A673 (cell line): ENCODE measurements at regions of chr13 and their contacts with region 1.

Region 1: DNA sequence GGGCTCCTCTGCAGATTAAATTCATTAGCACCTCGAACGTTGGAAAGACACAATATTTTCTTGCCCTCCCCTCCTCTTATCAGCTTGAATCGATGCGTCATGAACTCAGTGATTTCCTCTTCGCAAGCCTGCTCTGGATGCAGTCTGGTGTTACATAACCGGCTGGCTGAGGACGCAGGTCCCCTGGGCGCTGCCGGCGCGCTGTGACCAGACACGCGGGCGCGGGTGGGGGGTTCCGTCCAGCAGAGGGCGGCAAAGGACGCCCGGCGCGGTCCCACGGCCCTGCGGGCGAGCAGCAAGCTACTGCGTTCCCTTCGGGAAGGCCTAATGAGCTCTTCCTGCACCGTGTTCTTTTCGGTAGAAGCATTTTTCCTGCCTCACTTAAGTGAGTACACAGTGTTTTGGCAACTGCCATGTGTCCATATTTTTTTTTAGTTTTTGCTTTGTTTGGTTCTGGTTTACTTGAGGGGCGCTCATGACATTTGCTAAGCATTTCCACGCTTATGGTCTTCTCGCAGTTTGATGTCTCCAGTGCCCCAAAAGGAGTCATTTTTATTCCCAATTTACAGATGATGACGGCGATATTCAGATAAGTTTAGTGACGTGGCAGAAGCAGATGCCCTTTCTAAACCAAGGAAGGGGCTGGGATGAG is 112.2 kb upstream of the MBNL2 start:
- DNase-seq: peak; percentile 88
- H3K4me3 ChIP-seq: no peak overlapping the region
- H3K27ac ChIP-seq: no peak overlapping the region
- H3K4me1 ChIP-seq: no peaks in the 10 kb centered on the region
- H3K27me3 ChIP-seq: no peaks in the 10 kb centered on the region
- CTCF ChIP-seq: peak; percentile 98

Region 2: DNA sequence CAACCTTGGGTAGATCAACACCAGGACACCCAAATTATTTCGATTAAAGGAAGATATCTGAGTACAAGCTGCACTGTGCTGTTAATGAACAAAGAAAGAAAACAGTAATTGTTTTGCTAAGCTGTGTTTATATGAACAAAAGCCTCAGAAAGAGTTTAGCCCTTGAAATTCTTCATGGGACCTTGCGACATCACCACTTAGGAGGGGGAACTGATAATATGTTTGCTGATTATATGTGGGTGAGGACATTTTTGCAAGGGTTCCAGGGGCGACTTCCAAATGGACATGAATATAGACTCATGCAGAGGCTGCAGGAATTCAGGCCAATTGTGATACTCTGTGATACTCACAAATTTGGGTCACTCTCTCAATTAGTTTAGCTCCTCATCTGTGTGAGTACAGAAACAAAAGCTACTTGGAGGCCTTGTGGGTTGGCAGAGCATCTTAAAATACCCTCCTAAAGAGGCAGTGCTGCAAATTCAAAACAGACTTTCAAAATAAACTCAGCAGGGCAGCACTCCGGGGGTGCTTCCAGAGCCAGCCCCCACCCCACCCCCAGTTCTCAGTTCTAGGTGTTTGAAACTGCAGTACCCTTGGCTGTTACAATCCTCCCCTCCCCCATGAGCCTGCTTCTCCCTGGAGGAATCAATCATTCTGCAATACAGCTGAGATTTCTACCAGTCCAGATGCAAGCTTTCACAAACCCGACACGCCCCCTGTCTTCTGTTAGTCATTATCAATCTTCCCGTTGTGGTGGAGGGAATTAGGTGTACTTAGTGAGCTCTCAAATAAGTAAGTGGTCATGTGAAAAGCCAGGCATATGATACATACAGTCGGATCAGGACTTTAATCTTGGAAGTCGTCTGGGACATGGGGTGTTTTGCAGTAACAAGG is 15.2 kb after region 1 on chr13:
- CTCF ChIA-PET with region 1: interaction called, 18 read pairs
- POLR2A ChIA-PET with region 1: no interaction called
- intact Hi-C with region 1: no loop called
- DNase-seq: peak; percentile 93
- H3K4me3 ChIP-seq: no peak overlapping the region
- H3K27ac ChIP-seq: peak overlapping the region; percentile 47
- H3K4me1 ChIP-seq: peaks cover 25% of the 10 kb centered on the region
- H3K27me3 ChIP-seq: no peaks in the 10 kb centered on the region
- CTCF ChIP-seq: peak; percentile 33; the same call in 1 of the 2 replicates

Region 3: GRCh38 chr13:97212601-97213040 is 102.7 kb after region 1 on chr13:
- CTCF ChIA-PET with region 1: interaction called, 10 read pairs
- POLR2A ChIA-PET with region 1: no interaction called
- intact Hi-C with region 1: loop called (anchors 5 kb)
- DNase-seq: peak; percentile 22
- H3K4me3 ChIP-seq: no peak overlapping the region
- H3K27ac ChIP-seq: no peak overlapping the region
- H3K4me1 ChIP-seq: no peaks in the 10 kb centered on the region
- H3K27me3 ChIP-seq: no peaks in the 10 kb centered on the region
- CTCF ChIP-seq: peak; percentile 56

Region 4: GRCh38 chr13:97344265-97345175 is 234.6 kb after region 1 on chr13:
- CTCF ChIA-PET with region 1: interaction called, 15 read pairs
- POLR2A ChIA-PET with region 1: no interaction called
- intact Hi-C with region 1: loop called (anchors 1 kb)
- DNase-seq: peak; percentile 73
- H3K4me3 ChIP-seq: no peak overlapping the region
- H3K27ac ChIP-seq: no peak overlapping the region
- H3K4me1 ChIP-seq: no peaks in the 10 kb centered on the region
- H3K27me3 ChIP-seq: no peaks in the 10 kb centered on the region
- CTCF ChIP-seq: peak; percentile 71

Region 5: GRCh38 chr13:97359181-97360057 is 249.5 kb after region 1 on chr13:
- CTCF ChIA-PET with region 1: interaction called, 20 read pairs
- POLR2A ChIA-PET with region 1: no interaction called
- intact Hi-C with region 1: loop called (anchors 1 kb)
- DNase-seq: peak; percentile 83
- H3K4me3 ChIP-seq: no peak overlapping the region
- H3K27ac ChIP-seq: no peak overlapping the region
- H3K4me1 ChIP-seq: no peaks in the 10 kb centered on the region
- H3K27me3 ChIP-seq: no peaks in the 10 kb centered on the region
- CTCF ChIP-seq: peak; percentile 91

Region 6: GRCh38 chr13:97574926-97575325 is 465.0 kb after region 1 on chr13:
- CTCF ChIA-PET with region 1: no interaction called
- POLR2A ChIA-PET with region 1: no interaction called
- intact Hi-C with region 1: loop called (anchors 10 kb)
- DNase-seq: peak; percentile 83
- H3K4me3 ChIP-seq: no peak overlapping the region
- H3K27ac ChIP-seq: no peak overlapping the region
- H3K4me1 ChIP-seq: peaks cover 23% of the 10 kb centered on the region
- H3K27me3 ChIP-seq: no peaks in the 10 kb centered on the region
- CTCF ChIP-seq: peak; percentile 78

Region 7: DNA sequence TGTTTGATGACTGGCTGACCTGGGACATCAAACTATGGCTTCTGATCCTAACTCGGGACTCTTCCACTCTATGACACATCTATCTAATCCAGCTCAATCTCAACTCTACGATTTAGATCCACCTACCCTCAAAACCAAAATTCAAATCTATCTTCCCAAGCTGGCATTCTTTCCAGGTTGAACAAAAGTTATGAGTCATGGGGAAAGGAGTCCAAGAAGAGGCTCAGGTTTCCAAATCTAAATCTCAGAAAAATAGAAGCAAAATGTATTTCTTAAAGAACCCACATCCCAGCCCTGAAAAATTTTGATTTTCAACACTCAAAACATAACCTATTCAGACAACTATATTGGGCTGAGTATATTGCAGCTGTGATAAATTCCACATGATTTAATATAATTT is 699.6 kb after region 1 on chr13:
- CTCF ChIA-PET with region 1: no interaction called
- POLR2A ChIA-PET with region 1: no interaction called
- intact Hi-C with region 1: loop called (anchors 10 kb)
- DNase-seq: no peak
- H3K4me3 ChIP-seq: no peak overlapping the region
- H3K27ac ChIP-seq: no peak overlapping the region
- H3K4me1 ChIP-seq: no peaks in the 10 kb centered on the region
- H3K27me3 ChIP-seq: no peaks in the 10 kb centered on the region
- CTCF ChIP-seq: no peak